A673 (cell line): ENCODE measurements at regions of chr2 and their contacts with region 1.

Region 1: DNA sequence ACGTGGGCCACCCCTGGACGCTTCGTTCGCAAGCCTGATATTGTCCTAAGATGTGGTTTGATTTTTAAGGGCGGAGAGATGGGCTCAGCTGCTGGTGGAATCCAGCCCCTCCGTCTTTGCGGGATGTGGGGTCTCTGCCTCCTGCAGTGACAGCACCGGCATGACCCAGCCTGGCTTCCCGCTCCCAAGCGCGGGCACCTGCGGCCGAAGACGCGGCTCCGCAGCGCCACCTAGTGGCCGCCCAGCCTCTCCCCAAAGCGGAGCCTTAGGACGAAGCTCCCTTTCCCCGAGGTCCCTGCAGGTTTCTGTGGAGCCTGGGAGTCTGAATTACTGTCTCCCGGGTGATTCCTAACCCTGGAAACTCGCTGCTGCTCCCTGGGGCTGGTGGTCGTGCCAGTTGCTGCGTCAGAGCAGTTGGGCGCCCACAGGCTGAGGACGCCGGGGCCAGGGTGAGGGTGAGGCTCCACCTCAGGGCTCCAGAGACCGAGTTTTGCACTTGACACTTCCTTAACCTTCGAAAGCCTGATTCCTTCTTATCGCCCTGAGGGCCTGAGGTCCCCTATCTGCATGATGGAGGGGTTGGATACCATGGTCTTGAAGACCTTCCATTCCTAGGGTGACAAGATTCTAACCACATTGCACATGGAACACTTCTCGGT is 137.5 kb downstream of the TPO start:
- DNase-seq: peak; percentile 61
- H3K4me3 ChIP-seq: no peak overlapping the region
- H3K27ac ChIP-seq: no peak overlapping the region
- H3K4me1 ChIP-seq: no peaks in the 10 kb centered on the region
- H3K27me3 ChIP-seq: no peaks in the 10 kb centered on the region
- CTCF ChIP-seq: peak; percentile 99

Region 2: DNA sequence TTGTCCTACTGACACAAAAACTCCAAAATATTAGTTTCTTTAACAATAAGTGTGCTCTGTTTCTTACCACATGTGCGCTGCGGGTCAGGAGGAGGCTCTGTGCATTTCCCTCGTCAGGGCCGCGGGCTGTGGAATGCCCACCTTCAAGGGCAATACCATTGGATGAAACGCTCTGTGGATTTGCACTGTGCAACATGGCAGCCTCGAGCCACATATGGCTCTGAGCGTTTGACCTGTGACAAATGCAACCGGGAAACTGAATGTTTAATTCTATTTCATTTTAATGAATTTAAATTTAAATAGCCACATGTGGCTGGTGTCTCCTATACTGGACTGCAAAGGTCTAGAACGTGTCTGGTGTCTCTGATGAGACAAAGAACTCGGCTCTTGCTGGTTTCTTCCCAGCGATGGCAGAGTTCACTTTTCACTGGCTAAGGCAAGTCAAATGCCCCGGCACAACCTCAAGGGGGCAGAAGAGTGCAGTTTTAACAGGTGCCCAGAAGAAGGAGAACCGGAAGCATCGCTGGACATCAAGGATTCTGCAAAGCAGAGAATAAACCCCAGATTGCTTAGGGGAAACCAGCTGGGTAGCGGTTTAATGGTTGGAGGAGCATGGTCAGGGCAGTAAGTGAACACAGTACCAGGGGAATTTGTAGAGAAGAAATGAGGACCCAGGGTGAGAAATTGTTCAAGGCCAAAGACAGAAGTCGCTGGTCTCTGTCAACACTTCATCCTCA is 836.6 kb before region 1 on chr2:
- CTCF ChIA-PET with region 1: interaction called, 3 read pairs
- POLR2A ChIA-PET with region 1: no interaction called
- intact Hi-C with region 1: loop called (anchors 2 kb)
- DNase-seq: peak; percentile 75
- H3K4me3 ChIP-seq: no peak overlapping the region
- H3K27ac ChIP-seq: no peak overlapping the region
- H3K4me1 ChIP-seq: no peaks in the 10 kb centered on the region
- H3K27me3 ChIP-seq: no peaks in the 10 kb centered on the region
- CTCF ChIP-seq: peak; percentile 86

Region 3: GRCh38 chr2:950080-950966 is 600.5 kb before region 1 on chr2 and contains the start of gene SNTG2:
- CTCF ChIA-PET with region 1: interaction called, 5 read pairs
- POLR2A ChIA-PET with region 1: no interaction called
- intact Hi-C with region 1: loop called (anchors 2 kb)
- DNase-seq: peak; percentile 65
- H3K4me3 ChIP-seq: peak within 1 kb of the TSS; percentile 58
- H3K27ac ChIP-seq: peak within 1 kb of the TSS; percentile 42
- H3K4me1 ChIP-seq: peaks cover 6% of the 10 kb centered on the region
- H3K27me3 ChIP-seq: peaks cover 20% of the 10 kb centered on the region
- CTCF ChIP-seq: no peak
- total RNA-seq, gene SNTG2: 3.7 and 3.8 TPM in 2 replicates

Region 4: GRCh38 chr2:1140389-1141003 is 410.3 kb before region 1 on chr2:
- CTCF ChIA-PET with region 1: interaction called, 3 read pairs
- POLR2A ChIA-PET with region 1: no interaction called
- intact Hi-C with region 1: loop called (anchors 10 kb)
- DNase-seq: peak; percentile 26
- H3K4me3 ChIP-seq: no peak overlapping the region
- H3K27ac ChIP-seq: no peak overlapping the region
- H3K4me1 ChIP-seq: no peaks in the 10 kb centered on the region
- H3K27me3 ChIP-seq: no peaks in the 10 kb centered on the region
- CTCF ChIP-seq: peak; percentile 91

Region 5: DNA sequence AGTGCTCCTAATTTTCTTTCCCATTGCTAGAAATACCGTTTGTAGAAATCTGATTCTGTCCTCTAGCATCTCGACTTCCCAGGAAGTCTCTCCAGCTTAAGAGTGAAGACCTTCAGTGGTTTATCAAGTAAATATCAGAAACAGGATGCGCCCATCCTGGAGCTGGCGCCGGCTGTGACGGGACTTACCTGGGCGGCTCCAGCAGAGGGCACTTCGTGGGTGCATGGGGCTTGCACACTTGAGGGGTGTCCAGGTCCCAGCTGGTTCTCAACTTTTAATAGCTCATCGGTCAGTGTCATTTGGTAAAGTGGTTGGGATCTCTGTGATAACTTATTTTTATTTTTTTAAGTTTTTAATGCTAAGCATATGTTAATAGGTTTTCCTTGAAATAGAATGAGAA is 304.5 kb before region 1 on chr2:
- CTCF ChIA-PET with region 1: no interaction called
- POLR2A ChIA-PET with region 1: no interaction called
- intact Hi-C with region 1: loop called (anchors 10 kb)
- DNase-seq: no peak
- H3K4me3 ChIP-seq: no peak overlapping the region
- H3K27ac ChIP-seq: no peak overlapping the region
- H3K4me1 ChIP-seq: no peaks in the 10 kb centered on the region
- H3K27me3 ChIP-seq: no peaks in the 10 kb centered on the region
- CTCF ChIP-seq: 0 out of 2 replicates have a peak, but pooled peaks have one; percentile 11

Region 6: DNA sequence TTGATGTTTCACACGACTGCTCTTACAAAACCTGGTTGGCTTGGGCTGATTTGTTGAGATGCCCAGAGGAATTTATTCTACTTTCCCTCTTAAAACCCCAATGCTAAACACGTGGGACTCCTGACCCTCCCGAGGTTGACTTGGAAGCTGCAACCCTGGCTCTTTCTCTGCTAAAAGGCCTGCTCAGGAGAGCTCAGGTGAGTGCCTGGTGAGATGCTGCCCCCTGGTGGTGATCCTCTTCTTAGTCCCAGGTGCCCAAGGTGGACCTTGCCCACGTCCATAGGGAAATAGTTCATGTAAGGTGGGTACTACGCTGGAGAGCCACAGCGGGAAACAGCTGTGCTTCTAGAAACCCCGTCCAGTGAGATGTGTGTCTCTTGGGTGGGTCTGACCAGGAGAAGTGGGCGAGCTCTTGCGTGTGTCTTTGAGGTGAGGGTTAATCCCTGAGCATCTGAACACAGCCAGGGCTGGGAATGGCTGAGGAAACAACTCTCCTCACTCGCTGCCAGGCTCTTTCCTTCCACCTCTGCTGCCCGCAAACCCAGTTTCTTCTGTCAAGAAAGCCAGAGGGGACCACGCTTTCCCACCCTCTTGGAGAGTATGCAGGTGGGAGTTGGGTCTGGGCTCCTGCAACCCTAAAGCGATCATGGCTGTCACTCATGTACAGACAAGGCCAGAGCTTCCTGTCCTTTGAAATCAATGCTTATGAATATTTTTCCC is 219.1 kb after region 1 on chr2:
- CTCF ChIA-PET with region 1: interaction called, 6 read pairs
- POLR2A ChIA-PET with region 1: no interaction called
- intact Hi-C with region 1: loop called (anchors 5 kb)
- DNase-seq: peak; percentile 63
- H3K4me3 ChIP-seq: no peak overlapping the region
- H3K27ac ChIP-seq: no peak overlapping the region
- H3K4me1 ChIP-seq: peaks cover 5% of the 10 kb centered on the region
- H3K27me3 ChIP-seq: no peaks in the 10 kb centered on the region
- CTCF ChIP-seq: peak; percentile 92